ENCODE measurements at regions of chr1 and their contacts with region 1.

Region 1: GRCh38 chr1:221435504-221435904 is 306.4 kb downstream of the DUSP10 start:
- DNase-seq: no peak
- H3K4me3 ChIP-seq: no peak overlapping the region
- H3K27ac ChIP-seq: no peak overlapping the region
- H3K4me1 ChIP-seq: peaks cover 0 to 18% (median 5%) of the 10 kb centered on the region in 4 donors
- H3K27me3 ChIP-seq: no peaks in the 10 kb centered on the region
- CTCF ChIP-seq: peak; percentile 91 to 93

Region 2: GRCh38 chr1:221263831-221264767 is 171.4 kb before region 1 on chr1:
- intact Hi-C with region 1: loop called (anchors 5 kb)
- DNase-seq: peak; percentile 71 to 73
- H3K4me3 ChIP-seq: no peak overlapping the region
- H3K27ac ChIP-seq: peak overlapping the region in 1 of 2 donors; percentile 11
- H3K4me1 ChIP-seq: peaks cover 0 to 15% (median 2%) of the 10 kb centered on the region in 4 donors
- H3K27me3 ChIP-seq: no peaks in the 10 kb centered on the region
- CTCF ChIP-seq: peak; percentile 69 to 73